Calu3 (cell line): ENCODE measurements at regions of chr7 and their contacts with region 1.

Region 1: DNA sequence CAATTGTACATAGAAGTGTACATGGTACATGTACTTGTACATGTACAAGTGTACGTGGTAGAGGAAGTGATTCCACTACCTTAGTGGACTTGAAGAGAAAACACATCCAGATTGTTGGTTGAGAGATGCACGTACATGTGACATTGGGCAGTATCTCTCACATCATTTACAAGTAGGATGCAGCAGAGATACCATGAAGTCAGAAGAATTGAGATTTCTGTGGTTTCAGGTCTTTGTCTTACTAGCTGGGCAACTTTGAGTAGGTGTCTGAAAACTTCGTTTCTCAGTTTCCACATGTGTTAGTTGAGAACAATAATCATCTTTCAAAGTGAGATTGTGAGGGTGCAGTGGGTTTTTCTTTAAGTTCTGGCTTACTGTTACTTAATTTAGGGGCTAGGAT is 21.5 kb downstream of the CLDN12 start:
- DNase-seq: no peak
- H3K4me3 Mint-ChIP-seq: no peak overlapping the region
- H3K27ac Mint-ChIP-seq: no peak overlapping the region
- H3K4me1 Mint-ChIP-seq: peaks cover 16% of the 10 kb centered on the region
- H3K27me3 Mint-ChIP-seq: no peaks in the 10 kb centered on the region
- CTCF ChIP-seq: no peak

Region 2: GRCh38 chr7:90262438-90262837 is 162.3 kb before region 1 on chr7:
- CTCF ChIA-PET with region 1: no interaction called
- intact Hi-C with region 1: loop called (anchors 5 kb)
- DNase-seq: no peak
- H3K4me3 Mint-ChIP-seq: no peak overlapping the region
- H3K27ac Mint-ChIP-seq: no peak overlapping the region
- H3K4me1 Mint-ChIP-seq: no peaks in the 10 kb centered on the region
- H3K27me3 Mint-ChIP-seq: no peaks in the 10 kb centered on the region
- CTCF ChIP-seq: no peak

Region 3: GRCh38 chr7:90455163-90456030 is 30.7 kb after region 1 on chr7:
- CTCF ChIA-PET with region 1: no interaction called
- intact Hi-C with region 1: no loop called
- DNase-seq: peak; percentile 8
- H3K4me3 Mint-ChIP-seq: peak overlapping the region; percentile 58
- H3K27ac Mint-ChIP-seq: no peak overlapping the region
- H3K4me1 Mint-ChIP-seq: peaks cover 10% of the 10 kb centered on the region
- H3K27me3 Mint-ChIP-seq: no peaks in the 10 kb centered on the region
- CTCF ChIP-seq: peak; percentile 44